ENCODE measurements at regions of chr7 and their contacts with region 1.

Region 1: GRCh38 chr7:114107522-114107921 is 188.7 kb upstream of the PPP1R3A start:
- DNase-seq: no peak
- H3K4me3 ChIP-seq: no peak overlapping the region
- H3K27ac ChIP-seq: no peak overlapping the region
- H3K4me1 ChIP-seq: peaks cover 0 to 29% (median 3%) of the 10 kb centered on the region in 4 donors
- H3K27me3 ChIP-seq: no peaks in the 10 kb centered on the region
- CTCF ChIP-seq: no peak

Region 2: DNA sequence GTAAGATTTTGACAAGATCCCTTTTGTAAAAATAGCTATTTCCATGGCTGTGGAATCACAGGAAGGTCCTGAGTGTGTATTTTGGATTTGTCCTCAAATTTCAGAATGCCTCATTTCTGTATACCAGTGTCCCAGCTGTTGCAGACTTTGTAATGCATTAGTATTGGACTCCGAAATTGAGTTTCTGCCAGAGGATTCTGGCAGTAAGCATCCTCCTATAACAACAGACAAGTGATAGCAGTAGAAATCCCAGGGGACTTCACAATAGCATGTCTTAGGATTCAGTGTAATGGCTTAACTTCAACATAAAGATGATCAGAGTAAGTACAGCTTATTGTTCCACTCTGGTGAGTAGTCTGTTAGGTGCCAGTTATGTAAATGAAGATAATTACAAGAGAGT is 411.7 kb after region 1 on chr7:
- intact Hi-C with region 1: loop called (anchors 10 kb)
- DNase-seq: no peak
- H3K4me3 ChIP-seq: no peak overlapping the region
- H3K27ac ChIP-seq: no peak overlapping the region
- H3K4me1 ChIP-seq: peaks cover 0 to 5% (median 0%) of the 10 kb centered on the region in 4 donors
- H3K27me3 ChIP-seq: no peaks in the 10 kb centered on the region
- CTCF ChIP-seq: no peak

Region 3: DNA sequence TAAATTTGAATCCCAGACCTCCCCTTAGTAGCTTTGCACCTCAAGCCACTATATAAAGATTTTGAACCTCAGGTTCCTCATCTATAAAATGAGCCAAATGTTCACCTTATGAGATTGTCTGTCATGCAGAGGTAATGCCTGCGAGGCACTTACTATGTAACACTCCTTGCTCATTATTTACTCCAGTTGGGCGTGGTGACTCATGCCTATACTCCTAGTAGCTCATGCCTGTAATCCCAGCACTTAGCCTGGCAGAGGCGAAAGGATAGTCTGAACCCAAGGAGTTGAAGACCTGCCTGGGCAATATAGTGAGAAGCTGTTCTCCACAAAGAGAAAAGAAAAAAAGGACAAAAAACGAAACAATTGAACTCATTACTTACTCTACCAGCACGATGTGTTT is 896.6 kb after region 1 on chr7:
- intact Hi-C with region 1: loop called (anchors 5 kb)
- DNase-seq: no peak
- H3K4me3 ChIP-seq: no peak overlapping the region
- H3K27ac ChIP-seq: no peak overlapping the region
- H3K4me1 ChIP-seq: peaks cover 0 to 16% (median 14%) of the 10 kb centered on the region in 4 donors
- H3K27me3 ChIP-seq: no peaks in the 10 kb centered on the region
- CTCF ChIP-seq: no peak